Calu3 (cell line): ENCODE measurements at regions of chr20 and their contacts with region 1.

Region 1: GRCh38 chr20:43465625-43465943 is 7.9 kb downstream of the SRSF6 start:
- DNase-seq: no peak
- H3K4me3 Mint-ChIP-seq: no peak overlapping the region
- H3K27ac Mint-ChIP-seq: peak overlapping the region; percentile 25
- H3K4me1 Mint-ChIP-seq: peaks cover 10% of the 10 kb centered on the region
- H3K27me3 Mint-ChIP-seq: no peaks in the 10 kb centered on the region
- CTCF ChIP-seq: no peak

Region 2: GRCh38 chr20:43507150-43508080 is 41.8 kb after region 1 on chr20 and contains the start of gene L3MBTL1:
- CTCF ChIA-PET with region 1: interaction called, 3 read pairs
- intact Hi-C with region 1: loop called (anchors 5 kb)
- DNase-seq: peak; percentile 89
- H3K4me3 Mint-ChIP-seq: peak within 1 kb of the TSS; percentile 68
- H3K27ac Mint-ChIP-seq: no peak within 1 kb of the TSS
- H3K4me1 Mint-ChIP-seq: no peaks in the 10 kb centered on the region
- H3K27me3 Mint-ChIP-seq: peaks cover 49% of the 10 kb centered on the region
- CTCF ChIP-seq: no peak
- total RNA-seq, gene L3MBTL1: 39.7 and 42.3 TPM in 2 replicates